ENCODE measurements at regions of chr5 and their contacts with region 1.

Region 1: GRCh38 chr5:170333161-170333910 is 35.8 kb upstream of the LCP2 start:
- DNase-seq: peak; percentile 83
- H3K4me3 Mint-ChIP-seq: peak overlapping the region; percentile 80
- H3K27ac Mint-ChIP-seq: no peak overlapping the region
- H3K4me1 Mint-ChIP-seq: peaks cover 58% of the 10 kb centered on the region
- H3K27me3 Mint-ChIP-seq: no peaks in the 10 kb centered on the region

Region 2: DNA sequence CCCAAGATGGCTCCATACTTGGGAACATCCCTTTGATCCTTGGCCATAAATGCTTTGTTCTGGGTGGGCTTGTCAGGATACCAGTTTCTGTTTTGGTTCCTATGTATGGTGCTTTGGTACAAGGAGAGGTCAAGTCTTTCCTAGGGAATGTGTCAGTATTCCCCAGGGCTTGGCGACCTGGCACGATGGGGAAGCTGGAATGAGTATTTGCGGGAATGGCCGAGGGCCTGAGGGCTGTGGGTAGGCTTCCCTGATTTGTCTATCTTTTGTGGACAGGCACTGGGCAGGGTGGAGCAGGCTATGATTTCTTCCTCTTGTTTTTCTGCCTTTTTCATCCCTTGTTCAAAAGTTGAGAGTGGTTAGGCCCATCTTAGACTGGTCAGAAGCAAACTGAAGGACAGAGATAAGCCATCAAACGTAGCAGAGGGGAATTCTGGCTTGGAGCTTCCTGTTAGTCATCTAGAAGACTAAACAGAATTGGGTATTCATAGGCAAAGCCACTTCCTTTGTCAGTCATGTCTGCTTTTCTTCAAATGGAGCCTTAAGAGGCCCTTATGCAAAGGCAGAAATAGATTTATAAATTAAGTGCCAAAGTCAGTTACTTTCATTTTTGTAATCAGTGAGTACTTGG is 682.5 kb before region 1 on chr5:
- intact Hi-C with region 1: loop called (anchors 5 kb)
- DNase-seq: peak; percentile 79
- H3K4me3 Mint-ChIP-seq: peak overlapping the region; percentile 83
- H3K27ac Mint-ChIP-seq: peak overlapping the region; percentile 97
- H3K4me1 Mint-ChIP-seq: peaks cover 88% of the 10 kb centered on the region
- H3K27me3 Mint-ChIP-seq: no peaks in the 10 kb centered on the region

Region 3: DNA sequence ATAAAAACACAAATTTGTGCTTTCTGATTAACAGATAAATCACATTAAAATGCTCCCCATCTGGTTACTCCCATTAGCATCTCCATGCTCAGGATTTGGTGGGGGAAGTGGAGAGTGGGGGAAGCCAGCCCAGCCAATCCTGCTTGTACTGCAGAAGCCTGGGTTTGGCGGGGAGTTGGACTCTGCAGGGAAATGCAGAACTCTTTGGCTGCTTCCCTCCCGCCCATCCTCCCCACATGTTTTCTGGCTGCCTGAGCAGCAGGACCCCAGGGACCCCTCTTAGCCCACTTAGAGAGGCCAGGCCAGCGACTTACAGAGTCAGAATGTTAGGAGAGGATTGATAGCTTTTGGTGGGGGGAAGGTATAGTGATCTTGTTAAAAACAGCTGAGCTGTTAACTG is 287.1 kb before region 1 on chr5:
- intact Hi-C with region 1: no loop called
- DNase-seq: no peak
- H3K4me3 Mint-ChIP-seq: no peak overlapping the region
- H3K27ac Mint-ChIP-seq: no peak overlapping the region
- H3K4me1 Mint-ChIP-seq: peaks cover 12% of the 10 kb centered on the region
- H3K27me3 Mint-ChIP-seq: no peaks in the 10 kb centered on the region

Region 4: DNA sequence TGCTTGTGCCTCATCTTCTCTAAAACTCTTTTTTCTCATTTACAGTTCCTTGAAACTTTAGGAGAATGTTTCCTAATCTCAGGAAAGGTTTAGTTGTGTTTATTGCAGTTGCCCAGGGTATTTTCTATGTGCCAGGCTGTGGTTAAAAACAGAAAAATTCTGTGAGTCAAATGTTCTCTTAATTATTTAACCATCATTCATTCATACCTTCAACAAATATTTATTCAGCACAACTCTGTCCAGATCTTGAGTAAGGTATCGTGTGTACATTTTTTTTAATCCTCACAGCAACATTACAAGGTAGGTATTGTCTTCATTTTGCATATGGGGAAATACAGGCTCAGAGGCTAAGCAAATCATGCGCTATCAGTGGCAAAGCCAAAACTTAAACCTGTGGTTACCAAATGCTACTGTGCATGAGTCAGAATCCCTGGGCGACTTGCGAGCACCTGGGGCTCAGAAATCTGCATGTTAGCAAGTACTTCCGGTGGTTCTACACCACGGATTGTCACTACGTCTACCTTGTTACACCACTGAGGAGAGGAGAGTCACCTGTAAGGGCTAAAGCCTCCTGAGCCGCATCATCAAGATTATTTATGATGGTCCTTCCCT is 79.4 kb before region 1 on chr5:
- intact Hi-C with region 1: loop called (anchors 1 kb)
- DNase-seq: peak; percentile 88
- H3K4me3 Mint-ChIP-seq: peak overlapping the region; percentile 26
- H3K27ac Mint-ChIP-seq: peak overlapping the region; percentile 76
- H3K4me1 Mint-ChIP-seq: peaks cover 53% of the 10 kb centered on the region
- H3K27me3 Mint-ChIP-seq: no peaks in the 10 kb centered on the region

Region 5: DNA sequence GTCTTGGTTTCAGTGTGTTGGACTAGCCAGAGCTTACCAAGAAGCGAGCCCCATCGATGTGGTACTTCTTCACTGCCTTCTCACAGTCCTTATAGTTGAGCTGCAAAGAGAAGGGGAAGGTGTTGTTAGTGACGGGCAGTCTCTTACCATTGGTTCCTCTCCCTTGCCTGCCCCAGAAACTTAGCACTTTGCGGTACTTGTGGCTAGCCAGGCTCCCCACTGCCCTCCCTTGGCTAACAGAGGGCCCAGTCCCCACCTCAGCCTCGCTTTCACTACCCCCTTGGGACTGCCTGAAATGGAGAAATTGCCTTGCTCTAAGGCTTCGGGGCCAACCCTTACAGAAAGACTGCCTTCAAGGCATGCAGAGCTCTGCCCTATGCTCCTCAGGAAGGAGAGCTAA is 40.1 kb before region 1 on chr5:
- intact Hi-C with region 1: loop called (anchors 1 kb)
- DNase-seq: peak; percentile 86
- H3K4me3 Mint-ChIP-seq: peak overlapping the region; percentile 97
- H3K27ac Mint-ChIP-seq: peak overlapping the region; percentile 78
- H3K4me1 Mint-ChIP-seq: peaks cover 76% of the 10 kb centered on the region
- H3K27me3 Mint-ChIP-seq: no peaks in the 10 kb centered on the region

Region 6: DNA sequence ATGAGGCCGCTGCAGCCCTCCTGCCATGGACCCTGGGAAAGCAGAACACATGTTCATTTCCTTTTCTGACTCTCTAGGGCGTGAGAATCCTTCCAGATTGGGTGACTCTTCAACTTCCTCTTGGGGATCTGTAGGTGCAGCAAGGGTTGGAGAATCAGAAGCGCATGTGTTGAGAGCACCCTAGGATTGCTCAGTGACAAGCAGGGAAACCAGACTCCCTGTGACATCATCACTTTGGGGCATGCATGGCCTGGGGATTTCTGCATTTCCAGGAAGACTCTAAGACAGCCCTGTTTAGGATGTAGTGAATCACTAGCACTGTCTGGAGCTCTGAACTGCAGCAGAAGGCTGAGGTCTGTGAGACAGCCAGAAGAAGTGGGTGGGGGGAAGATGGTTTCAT is 20.7 kb before region 1 on chr5:
- intact Hi-C with region 1: loop called (anchors 1 kb)
- DNase-seq: peak; percentile 86
- H3K4me3 Mint-ChIP-seq: peak overlapping the region; percentile 76
- H3K27ac Mint-ChIP-seq: peak overlapping the region; percentile 94
- H3K4me1 Mint-ChIP-seq: peaks cover 48% of the 10 kb centered on the region
- H3K27me3 Mint-ChIP-seq: no peaks in the 10 kb centered on the region

Measured in activated CD4-positive, alpha-beta T cell treated with anti-CD3 and anti-CD28 coated beads, Interleukin-2, amount 10 ng/mL, durations not matched to agents 24 days and 14 days (primary cell).